Naive thymus-derived CD4-positive, alpha-beta T cell (primary cell): ENCODE measurements at regions of chr17 and their contacts with region 1.

Region 1: GRCh38 chr17:81959362-81960129 is 1.4 kb downstream of the NOTUM start:
- DNase-seq: peak; percentile 73 to 94 (median 84)
- ATAC-seq: peak; percentile 97
- H3K4me3 ChIP-seq: no peak overlapping the region
- H3K4me3 Mint-ChIP-seq: peak overlapping the region in 7 of 10 donors; percentile 43 to 82 (median 57)
- H3K27ac ChIP-seq: no peak overlapping the region
- H3K27ac Mint-ChIP-seq: no peak overlapping the region
- H3K4me1 ChIP-seq: peaks cover 0 to 10% of the 10 kb centered on the region in 2 donors
- H3K4me1 Mint-ChIP-seq: peaks cover 0 to 8% (median 2%) of the 10 kb centered on the region in 7 donors
- H3K27me3 ChIP-seq: peaks cover 8% of the 10 kb centered on the region in 2 donors
- H3K27me3 Mint-ChIP-seq: peaks cover 0 to 41% (median 12%) of the 10 kb centered on the region in 5 donors

Region 2: GRCh38 chr17:81902023-81902652 is 57.4 kb before region 1 on chr17 and contains the start of gene NPB:
- CTCF ChIA-PET with region 1: no interaction called
- POLR2A ChIA-PET with region 1: no interaction called
- intact Hi-C with region 1: no loop called
- DNase-seq: no peak
- ATAC-seq: peak; percentile 34
- H3K4me3 ChIP-seq: no peak within 1 kb of the TSS
- H3K4me3 Mint-ChIP-seq: peak within 1 kb of the TSS in 8 of 10 donors; percentile 3 to 70 (median 34)
- H3K27ac ChIP-seq: no peak within 1 kb of the TSS
- H3K27ac Mint-ChIP-seq: no peak within 1 kb of the TSS
- H3K4me1 ChIP-seq: no peaks in the 10 kb centered on the region
- H3K4me1 Mint-ChIP-seq: peaks cover 0 to 10% (median 8%) of the 10 kb centered on the region in 7 donors
- H3K27me3 ChIP-seq: peaks cover 0 to 4% of the 10 kb centered on the region in 2 donors
- H3K27me3 Mint-ChIP-seq: peaks cover 8 to 18% (median 8%) of the 10 kb centered on the region in 5 donors
- total RNA-seq, gene NPB: 0.29 to 0.59 (median 0.54) TPM in 4 of 5 experiments, not detected in the other

Region 3: GRCh38 chr17:81948635-81949378 is 10.7 kb before region 1 on chr17:
- CTCF ChIA-PET with region 1: interaction called, 10 read pairs
- POLR2A ChIA-PET with region 1: no interaction called
- intact Hi-C with region 1: no loop called
- DNase-seq: no peak
- ATAC-seq: no peak
- H3K4me3 ChIP-seq: no peak overlapping the region
- H3K4me3 Mint-ChIP-seq: no peak overlapping the region
- H3K27ac ChIP-seq: no peak overlapping the region
- H3K27ac Mint-ChIP-seq: no peak overlapping the region
- H3K4me1 ChIP-seq: peaks cover 0 to 4% of the 10 kb centered on the region in 2 donors
- H3K4me1 Mint-ChIP-seq: peaks cover 0 to 11% (median 4%) of the 10 kb centered on the region in 7 donors
- H3K27me3 ChIP-seq: no peaks in the 10 kb centered on the region
- H3K27me3 Mint-ChIP-seq: peaks cover 0 to 12% (median 0%) of the 10 kb centered on the region in 5 donors

Region 4: DNA sequence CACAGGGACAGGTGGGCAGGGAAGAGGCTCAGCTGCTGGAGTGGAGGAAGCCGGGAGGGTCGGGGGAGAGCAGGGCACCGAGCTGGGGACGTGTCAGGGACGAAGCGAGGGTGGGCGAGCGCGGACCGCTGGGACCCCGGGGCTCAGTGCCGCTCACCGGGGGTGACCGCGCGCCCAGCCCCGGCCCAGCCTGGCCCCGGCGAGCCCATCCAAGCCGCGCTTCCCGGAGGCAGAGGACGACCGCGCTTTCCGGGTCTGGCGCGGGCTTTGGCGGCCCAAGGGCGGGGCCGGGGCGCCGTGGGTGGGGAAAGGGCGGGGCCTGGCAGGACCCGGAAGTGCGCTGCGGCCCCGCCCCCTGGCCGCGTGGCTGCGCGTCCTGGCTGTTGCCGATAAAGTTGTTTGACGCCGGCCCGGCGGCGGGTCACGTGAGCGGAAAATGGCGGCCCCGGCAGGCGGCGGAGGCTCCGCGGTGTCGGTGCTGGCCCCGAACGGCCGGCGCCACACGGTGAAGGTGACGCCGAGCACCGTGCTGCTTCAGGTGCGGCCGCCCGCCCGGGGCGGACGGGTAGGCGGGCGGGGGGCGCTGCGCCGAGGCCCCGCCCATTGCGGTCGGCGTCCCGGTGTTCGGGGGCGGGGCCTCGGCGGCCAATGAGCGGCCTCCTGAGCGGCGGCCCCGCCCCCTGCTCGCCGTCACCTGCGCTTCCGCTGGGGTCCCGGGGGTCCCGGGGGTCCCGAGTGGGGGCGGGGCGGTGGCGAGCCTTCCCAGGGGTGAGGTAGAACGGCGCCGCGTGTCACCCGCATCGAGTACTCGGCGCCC is 17.9 kb after region 1 on chr17 and contains the start of gene ASPSCR1:
- CTCF ChIA-PET with region 1: interaction called, 6 read pairs
- POLR2A ChIA-PET with region 1: interaction called, 7 read pairs
- intact Hi-C with region 1: loop called in 1 of 2 experiments (anchors 2 kb)
- DNase-seq: peak; percentile 86 to 96 (median 93)
- ATAC-seq: peak; percentile 98
- H3K4me3 ChIP-seq: peak within 1 kb of the TSS; percentile 79
- H3K4me3 Mint-ChIP-seq: peak within 1 kb of the TSS; percentile 93 to 99 (median 96)
- H3K27ac ChIP-seq: peak within 1 kb of the TSS; percentile 90
- H3K27ac Mint-ChIP-seq: peak within 1 kb of the TSS; percentile 94 to 99 (median 97)
- H3K4me1 ChIP-seq: peaks cover 16 to 19% of the 10 kb centered on the region in 2 donors
- H3K4me1 Mint-ChIP-seq: peaks cover 26 to 51% (median 38%) of the 10 kb centered on the region in 7 donors
- H3K27me3 ChIP-seq: no peaks in the 10 kb centered on the region
- H3K27me3 Mint-ChIP-seq: peaks cover 0 to 7% (median 0%) of the 10 kb centered on the region in 5 donors
- total RNA-seq, gene ASPSCR1: 36.4 to 46.7 (median 46.0) TPM

Region 5: DNA sequence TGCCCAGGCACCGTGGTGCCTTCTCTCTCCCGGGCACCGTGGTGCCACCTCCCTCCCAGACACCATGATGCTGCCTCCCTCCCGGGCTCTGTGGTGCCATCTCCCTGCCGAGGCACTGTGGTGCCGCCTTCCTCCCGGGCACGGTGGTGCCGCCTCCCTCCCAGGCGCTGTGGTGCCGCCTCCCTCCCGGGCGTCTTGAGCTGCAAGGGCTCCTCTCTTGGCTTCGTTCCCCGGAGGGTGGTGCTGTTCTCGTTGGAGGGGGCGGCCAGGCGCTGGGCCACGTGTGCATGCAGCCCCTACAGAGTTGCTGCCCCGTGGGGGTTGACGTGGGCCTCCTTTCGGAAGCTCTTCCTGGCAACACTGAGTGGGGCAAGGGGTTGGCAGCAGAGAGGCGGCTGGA is 54.9 kb after region 1 on chr17:
- CTCF ChIA-PET with region 1: interaction called, 122 read pairs
- POLR2A ChIA-PET with region 1: interaction called, 29 read pairs
- intact Hi-C with region 1: no loop called
- DNase-seq: no peak
- ATAC-seq: no peak
- H3K4me3 ChIP-seq: no peak overlapping the region
- H3K4me3 Mint-ChIP-seq: no peak overlapping the region
- H3K27ac ChIP-seq: no peak overlapping the region
- H3K27ac Mint-ChIP-seq: no peak overlapping the region
- H3K4me1 ChIP-seq: no peaks in the 10 kb centered on the region
- H3K4me1 Mint-ChIP-seq: peaks cover 0 to 2% (median 0%) of the 10 kb centered on the region in 7 donors
- H3K27me3 ChIP-seq: no peaks in the 10 kb centered on the region
- H3K27me3 Mint-ChIP-seq: no peaks in the 10 kb centered on the region

Region 6: GRCh38 chr17:82153745-82154375 is 194.3 kb after region 1 on chr17:
- CTCF ChIA-PET with region 1: interaction called, 5 read pairs
- POLR2A ChIA-PET with region 1: no interaction called
- intact Hi-C with region 1: loop called in 1 of 2 experiments (anchors 1 kb)
- DNase-seq: peak; percentile 76 to 91 (median 82)
- ATAC-seq: peak; percentile 99
- H3K4me3 ChIP-seq: no peak overlapping the region
- H3K4me3 Mint-ChIP-seq: no peak overlapping the region
- H3K27ac ChIP-seq: no peak overlapping the region
- H3K27ac Mint-ChIP-seq: peak overlapping the region in 7 of 9 donors; percentile 23 to 97 (median 87)
- H3K4me1 ChIP-seq: peaks cover 0 to 10% of the 10 kb centered on the region in 2 donors
- H3K4me1 Mint-ChIP-seq: peaks cover 5 to 20% (median 10%) of the 10 kb centered on the region in 7 donors
- H3K27me3 ChIP-seq: no peaks in the 10 kb centered on the region
- H3K27me3 Mint-ChIP-seq: no peaks in the 10 kb centered on the region